GM10248 (cell line): ENCODE measurements at regions of chr19 and their contacts with region 1.

Region 1: DNA sequence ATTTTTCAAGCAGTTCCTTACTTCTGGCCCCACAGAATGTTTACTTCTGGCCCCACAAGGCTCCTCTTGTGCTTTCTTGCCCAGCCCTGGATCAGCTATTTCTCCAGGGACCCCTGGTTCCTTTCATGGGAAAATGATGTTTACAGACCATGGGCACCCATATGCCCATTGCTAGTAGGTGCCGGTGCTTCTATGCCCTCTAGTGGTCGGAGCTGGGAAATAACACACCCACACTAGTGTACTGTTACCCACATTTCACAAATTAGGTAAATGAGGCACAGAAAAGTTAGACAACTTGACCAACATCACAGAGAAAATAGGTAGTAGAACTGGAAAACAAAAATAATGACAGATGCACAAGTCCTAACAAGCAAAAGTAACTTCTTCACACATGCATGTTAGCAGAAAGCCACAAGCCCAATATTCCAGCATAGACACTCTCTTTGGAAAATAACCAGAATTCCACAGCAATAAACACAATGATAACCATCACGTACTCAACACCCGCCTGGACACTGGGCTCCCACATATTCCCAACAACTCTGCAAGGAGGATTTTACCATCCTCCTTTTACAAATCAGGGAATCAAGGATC is 1.3 kb upstream of the CEACAM6 start:
- DNase-seq: peak; percentile 33
- CTCF ChIP-seq: peak; percentile 58

Region 2: DNA sequence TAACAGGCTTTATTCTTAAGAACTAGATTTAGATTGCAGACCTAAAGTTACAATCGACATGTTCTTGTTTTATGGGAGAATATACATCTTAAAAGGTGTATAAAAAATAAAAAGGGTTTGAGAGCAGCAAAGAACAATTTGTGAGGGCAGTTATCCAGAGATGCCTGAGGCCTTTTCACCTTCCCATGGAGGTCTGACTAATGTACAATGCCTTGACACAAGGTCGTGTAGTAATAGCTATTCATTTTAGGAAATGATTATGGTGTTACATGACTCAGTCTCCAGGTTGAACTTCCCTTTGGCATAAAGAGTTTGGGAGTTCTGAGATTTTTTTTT is 21.3 kb after region 1 on chr19:
- CTCF ChIA-PET with region 1: interaction called, 21 read pairs
- POLR2A ChIA-PET with region 1: no interaction called
- DNase-seq: no peak
- CTCF ChIP-seq: no peak

Region 3: DNA sequence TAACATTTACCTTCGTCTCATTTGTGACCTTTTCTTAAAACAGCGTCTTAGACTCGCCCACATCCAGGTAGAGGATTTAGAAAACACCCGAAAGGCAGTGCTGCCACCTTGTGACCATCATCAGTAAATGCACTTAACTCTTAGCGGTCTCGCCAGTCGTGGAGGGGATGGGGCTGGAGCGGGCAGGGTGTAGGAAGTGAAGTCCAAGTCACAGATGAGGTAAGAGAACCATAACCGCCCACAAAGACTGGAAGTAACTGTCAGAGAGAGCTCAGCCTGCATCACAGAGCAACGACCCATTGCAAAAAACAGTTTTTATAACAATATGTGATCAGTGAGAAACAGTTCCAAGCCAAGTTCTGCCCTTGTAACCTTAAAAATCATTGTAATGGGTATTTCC is 31.6 kb after region 1 on chr19:
- CTCF ChIA-PET with region 1: interaction called, 38 read pairs
- POLR2A ChIA-PET with region 1: no interaction called
- DNase-seq: peak; percentile 83
- CTCF ChIP-seq: peak; percentile 90

Region 4: GRCh38 chr19:41795031-41795461 is 41.0 kb after region 1 on chr19:
- CTCF ChIA-PET with region 1: interaction called, 22 read pairs
- POLR2A ChIA-PET with region 1: no interaction called
- DNase-seq: peak; percentile 27
- CTCF ChIP-seq: peak; percentile 58

Region 5: DNA sequence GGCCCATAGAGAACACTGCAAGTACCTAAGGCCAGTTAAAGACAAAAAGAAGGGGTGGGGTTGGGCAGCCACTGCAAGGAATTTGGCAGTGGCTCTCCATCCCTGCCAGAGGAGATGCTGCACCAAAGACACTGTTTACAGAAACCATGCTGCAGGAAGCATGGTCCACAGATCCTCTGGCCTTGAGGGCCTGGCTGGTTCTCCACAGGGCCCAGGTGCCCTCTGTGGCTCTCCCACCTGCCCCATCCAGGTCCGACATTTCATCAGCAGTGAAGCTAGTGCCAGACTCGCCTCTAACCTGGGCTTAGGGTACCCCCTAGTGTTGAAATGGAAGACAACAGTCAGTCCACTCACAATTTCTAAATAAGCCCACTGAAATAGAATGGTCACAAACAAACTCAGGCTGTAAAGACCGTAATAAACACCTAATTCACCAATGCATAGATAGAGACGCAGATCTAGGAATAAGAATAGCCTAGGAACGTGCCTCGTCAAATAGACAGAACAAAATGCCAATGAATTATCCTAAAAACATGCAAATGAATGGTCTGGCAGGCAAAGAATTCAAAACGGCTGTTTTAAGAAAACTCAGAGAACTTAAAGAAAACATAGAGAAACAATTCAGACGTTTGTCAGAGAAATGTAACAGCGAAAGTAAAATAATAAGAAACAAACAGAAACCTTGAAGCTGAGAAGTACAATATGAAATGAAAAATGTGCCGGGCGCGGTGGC is 67.1 kb after region 1 on chr19:
- CTCF ChIA-PET with region 1: interaction called, 24 read pairs
- POLR2A ChIA-PET with region 1: no interaction called
- DNase-seq: peak; percentile 83
- CTCF ChIP-seq: peak; percentile 59

Region 6: GRCh38 chr19:41872775-41873647 is 119.0 kb after region 1 on chr19:
- CTCF ChIA-PET with region 1: no interaction called
- POLR2A ChIA-PET with region 1: no interaction called
- DNase-seq: no peak
- CTCF ChIP-seq: peak; percentile 96

Region 7: DNA sequence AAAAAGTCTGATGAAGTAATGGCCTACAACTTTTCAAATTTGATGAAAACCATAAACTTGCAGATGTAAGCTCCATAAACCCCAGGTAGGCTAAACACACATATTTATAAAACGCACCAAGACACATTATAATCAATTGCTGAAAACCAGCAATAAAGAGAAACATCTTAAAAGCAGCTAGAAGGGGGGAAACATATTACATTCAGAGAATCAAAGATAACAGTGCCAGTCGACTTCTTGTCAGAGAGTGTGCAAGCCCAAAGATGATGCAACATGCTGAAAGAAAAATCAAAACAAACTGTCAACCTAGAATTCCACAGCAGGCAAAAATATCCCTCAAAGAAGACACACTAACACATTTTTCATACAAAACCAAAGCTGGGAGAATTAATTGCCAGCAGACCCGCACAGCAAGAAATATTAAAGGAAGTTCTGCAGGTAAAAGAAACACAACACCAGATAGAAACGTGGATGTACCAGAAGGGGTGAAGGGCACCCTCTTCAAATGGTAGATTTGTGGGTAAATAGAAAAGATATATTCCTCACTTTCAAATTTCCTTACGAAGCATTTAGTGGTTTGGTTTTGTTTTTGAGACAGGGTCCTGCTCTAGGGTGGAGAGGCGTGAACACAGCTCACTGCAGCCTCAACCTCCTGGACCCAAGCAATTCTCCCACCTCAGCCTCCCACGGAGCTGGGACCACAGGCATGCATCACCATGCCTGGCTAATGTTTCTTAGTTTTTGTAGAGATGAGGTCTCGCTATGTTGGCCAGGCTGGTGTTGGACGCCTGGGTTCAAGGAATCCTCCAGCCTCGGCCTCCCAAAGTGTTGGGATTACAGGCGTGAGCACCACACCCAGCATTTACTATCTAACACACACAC is 256.5 kb after region 1 on chr19:
- CTCF ChIA-PET with region 1: no interaction called
- POLR2A ChIA-PET with region 1: no interaction called
- DNase-seq: no peak
- CTCF ChIP-seq: no peak